H1 (cell line): ENCODE measurements at regions of chr2 and their contacts with region 1.

Region 1: GRCh38 chr2:177164584-177165052 is 48.0 kb upstream of the HNRNPA3 start:
- DNase-seq: peak; percentile 56 to 89
- H3K4me3 ChIP-seq: peak overlapping the region in 1 of 4 experiments; percentile 24; a peak in 1 of 8 replicates
- H3K27ac ChIP-seq: no peak overlapping the region; the same call in 1 of the 2 replicates
- H3K4me1 ChIP-seq: peaks cover 0 to 10% (median 1%) of the 10 kb centered on the region in 4 experiments; a peak in 4 of 7 replicates
- H3K27me3 ChIP-seq: no peaks in the 10 kb centered on the region
- CTCF ChIP-seq: peak; percentile 92 to 98 (median 95)
- EP300 ChIP-seq: no peak
- POLR2A ChIP-seq: no peak
- RAD21 ChIP-seq: peak; percentile 99

Region 2: DNA sequence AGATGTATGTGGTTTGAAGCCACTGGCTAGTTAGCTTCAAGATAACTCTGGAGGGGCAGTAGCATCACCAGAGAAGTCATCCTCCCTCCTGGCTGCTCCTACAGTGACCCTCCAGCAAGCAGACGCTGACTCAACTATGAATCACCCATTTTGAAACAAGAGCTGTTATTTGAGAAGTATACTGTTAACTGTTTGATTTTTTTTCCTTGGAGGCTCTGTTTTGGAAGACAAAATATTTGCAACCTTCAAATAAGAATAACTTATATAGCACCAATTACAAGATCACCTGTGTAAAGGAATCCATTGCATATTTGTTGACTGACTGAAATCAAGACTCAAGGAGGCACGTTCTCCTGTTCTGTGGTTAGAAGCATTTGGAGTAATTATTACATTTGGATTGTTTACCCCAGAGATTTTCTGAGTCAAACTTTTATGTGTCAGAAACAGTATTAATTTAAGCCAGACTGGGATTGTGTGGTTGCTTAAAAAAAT is 581.6 kb before region 1 on chr2:
- CTCF ChIA-PET with region 1: no interaction called
- POLR2A ChIA-PET with region 1: no interaction called
- DNase-seq: no peak
- H3K4me3 ChIP-seq: no peak overlapping the region
- H3K27ac ChIP-seq: no peak overlapping the region
- H3K4me1 ChIP-seq: no peaks in the 10 kb centered on the region
- H3K27me3 ChIP-seq: no peaks in the 10 kb centered on the region
- CTCF ChIP-seq: no peak
- EP300 ChIP-seq: no peak
- POLR2A ChIP-seq: no peak
- RAD21 ChIP-seq: no peak

Region 3: GRCh38 chr2:177124371-177124770 is 40.2 kb before region 1 on chr2:
- CTCF ChIA-PET with region 1: no interaction called
- POLR2A ChIA-PET with region 1: no interaction called
- DNase-seq: no peak
- H3K4me3 ChIP-seq: no peak overlapping the region
- H3K27ac ChIP-seq: no peak overlapping the region
- H3K4me1 ChIP-seq: peaks cover 0 to 3% (median under 1%) of the 10 kb centered on the region in 4 experiments; a peak in 1 of 7 replicates
- H3K27me3 ChIP-seq: no peaks in the 10 kb centered on the region
- CTCF ChIP-seq: no peak
- EP300 ChIP-seq: no peak
- POLR2A ChIP-seq: no peak
- RAD21 ChIP-seq: no peak

Region 4: GRCh38 chr2:177175917-177176668 is 11.5 kb after region 1 on chr2:
- CTCF ChIA-PET with region 1: interaction called, 22 read pairs
- POLR2A ChIA-PET with region 1: interaction called, 3 read pairs
- DNase-seq: no peak
- H3K4me3 ChIP-seq: no peak overlapping the region
- H3K27ac ChIP-seq: no peak overlapping the region
- H3K4me1 ChIP-seq: peaks cover under 1 to 14% (median 4%) of the 10 kb centered on the region in 4 experiments; a peak in 4 of 7 replicates
- H3K27me3 ChIP-seq: no peaks in the 10 kb centered on the region
- CTCF ChIP-seq: no peak
- EP300 ChIP-seq: no peak
- POLR2A ChIP-seq: no peak
- RAD21 ChIP-seq: no peak

Region 5: GRCh38 chr2:177221534-177221933 is 56.9 kb after region 1 on chr2:
- CTCF ChIA-PET with region 1: interaction called, 12 read pairs
- POLR2A ChIA-PET with region 1: interaction called, 21 read pairs
- DNase-seq: no peak
- H3K4me3 ChIP-seq: no peak overlapping the region
- H3K27ac ChIP-seq: no peak overlapping the region
- H3K4me1 ChIP-seq: no peaks in the 10 kb centered on the region
- H3K27me3 ChIP-seq: no peaks in the 10 kb centered on the region
- CTCF ChIP-seq: no peak
- EP300 ChIP-seq: no peak
- POLR2A ChIP-seq: peak; percentile 22 to 42; a peak in 2 of 3 replicates
- RAD21 ChIP-seq: no peak

Region 6: GRCh38 chr2:177254433-177255226 is 90.0 kb after region 1 on chr2:
- CTCF ChIA-PET with region 1: interaction called, 32 read pairs
- POLR2A ChIA-PET with region 1: no interaction called
- DNase-seq: peak; percentile 39 to 86
- H3K4me3 ChIP-seq: no peak overlapping the region
- H3K27ac ChIP-seq: no peak overlapping the region
- H3K4me1 ChIP-seq: peaks cover 0 to 7% (median 0%) of the 10 kb centered on the region in 4 experiments; a peak in 1 of 7 replicates
- H3K27me3 ChIP-seq: no peaks in the 10 kb centered on the region
- CTCF ChIP-seq: peak; percentile 66 to 92 (median 89)
- EP300 ChIP-seq: no peak
- POLR2A ChIP-seq: no peak
- RAD21 ChIP-seq: peak; percentile 52 to 73

Region 7: GRCh38 chr2:177314194-177314593 is 149.6 kb after region 1 on chr2:
- CTCF ChIA-PET with region 1: interaction called, 17 read pairs
- POLR2A ChIA-PET with region 1: no interaction called
- DNase-seq: no peak
- H3K4me3 ChIP-seq: no peak overlapping the region
- H3K27ac ChIP-seq: no peak overlapping the region
- H3K4me1 ChIP-seq: peaks cover 0 to 5% (median 2%) of the 10 kb centered on the region in 4 experiments; a peak in 3 of 7 replicates
- H3K27me3 ChIP-seq: no peaks in the 10 kb centered on the region
- CTCF ChIP-seq: no peak
- EP300 ChIP-seq: no peak
- POLR2A ChIP-seq: no peak
- RAD21 ChIP-seq: no peak